ENCODE measurements at regions of chr1 and their contacts with region 1.

Region 1: GRCh38 chr1:161420763-161421455 is 53.2 kb upstream of the CFAP126 start:
- DNase-seq: peak; percentile 69
- ATAC-seq: peak; percentile 72
- H3K4me3 ChIP-seq: no peak overlapping the region
- H3K27ac ChIP-seq: no peak overlapping the region
- H3K4me1 ChIP-seq: peaks cover 17 to 42% of the 10 kb centered on the region in 2 experiments
- H3K27me3 ChIP-seq: no peaks in the 10 kb centered on the region
- CTCF ChIP-seq: no peak
- POLR2A ChIP-seq: no peak
- RAD21 ChIP-seq: no peak

Region 2: GRCh38 chr1:161399257-161399998 is 21.5 kb before region 1 on chr1:
- CTCF ChIA-PET with region 1: no interaction called
- POLR2A ChIA-PET with region 1: no interaction called
- RAD21 ChIA-PET with region 1: no interaction called
- intact Hi-C with region 1: loop called (anchors 1 kb)
- DNase-seq: peak; percentile 88
- ATAC-seq: peak; percentile 83
- H3K4me3 ChIP-seq: peak overlapping the region; percentile 63 to 66
- H3K27ac ChIP-seq: peak overlapping the region; percentile 95
- H3K4me1 ChIP-seq: peaks cover 9 to 25% of the 10 kb centered on the region in 2 experiments
- H3K27me3 ChIP-seq: no peaks in the 10 kb centered on the region
- CTCF ChIP-seq: peak in 2 of 3 experiments; percentile 54 to 61; a peak in 4 of 6 replicates
- POLR2A ChIP-seq: peak; percentile 92
- RAD21 ChIP-seq: no peak

Region 3: DNA sequence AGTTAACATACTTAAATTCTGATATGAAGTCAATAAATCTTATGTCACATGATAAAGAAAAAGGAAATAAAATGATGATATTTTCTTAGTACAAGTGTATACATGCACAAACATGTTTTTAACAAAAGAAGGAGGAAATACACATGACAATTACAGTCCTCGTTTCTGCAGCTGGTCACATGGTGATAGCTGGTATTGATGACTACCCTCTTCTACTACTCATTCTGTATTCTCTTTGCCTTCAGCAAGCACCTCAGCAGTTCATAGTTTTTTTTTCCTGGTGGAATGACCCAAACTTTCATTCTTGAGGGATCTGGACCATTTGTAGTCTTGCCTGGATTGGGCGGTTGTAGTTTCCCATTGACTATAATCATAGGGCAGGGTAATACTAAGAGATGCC is 11.2 kb after region 1 on chr1:
- CTCF ChIA-PET with region 1: no interaction called
- POLR2A ChIA-PET with region 1: no interaction called
- RAD21 ChIA-PET with region 1: no interaction called
- intact Hi-C with region 1: no loop called
- DNase-seq: no peak
- ATAC-seq: no peak
- H3K4me3 ChIP-seq: no peak overlapping the region
- H3K27ac ChIP-seq: no peak overlapping the region
- H3K4me1 ChIP-seq: peaks cover 2 to 14% of the 10 kb centered on the region in 2 experiments
- H3K27me3 ChIP-seq: no peaks in the 10 kb centered on the region; the same call in 1 of the 2 replicates
- CTCF ChIP-seq: no peak
- POLR2A ChIP-seq: no peak
- RAD21 ChIP-seq: no peak

Measured in HCT116 (cell line).